ENCODE measurements at regions of chr17 and their contacts with region 1.

Region 1: GRCh38 chr17:36188891-36189306 is 7.7 kb downstream of the CCL3L1 start:
- DNase-seq: peak; percentile 45
- H3K4me3 ChIP-seq: no peak overlapping the region
- H3K27ac ChIP-seq: peak overlapping the region; percentile 4 to 42 (median 32)
- H3K4me1 ChIP-seq: peaks cover 0 to 22% (median 6%) of the 10 kb centered on the region in 4 donors
- H3K27me3 ChIP-seq: peaks cover 11% of the 10 kb centered on the region
- CTCF ChIP-seq: no peak
- EP300 ChIP-seq: no peak
- POLR2A ChIP-seq: no peak

Region 2: GRCh38 chr17:36092230-36092629 is 96.7 kb before region 1 on chr17:
- in situ Hi-C with region 1: no loop called
- intact Hi-C with region 1: no loop called
- DNase-seq: no peak
- H3K4me3 ChIP-seq: no peak overlapping the region
- H3K27ac ChIP-seq: no peak overlapping the region
- H3K4me1 ChIP-seq: no peaks in the 10 kb centered on the region
- H3K27me3 ChIP-seq: no peaks in the 10 kb centered on the region
- CTCF ChIP-seq: no peak
- EP300 ChIP-seq: no peak
- POLR2A ChIP-seq: no peak

Region 3: DNA sequence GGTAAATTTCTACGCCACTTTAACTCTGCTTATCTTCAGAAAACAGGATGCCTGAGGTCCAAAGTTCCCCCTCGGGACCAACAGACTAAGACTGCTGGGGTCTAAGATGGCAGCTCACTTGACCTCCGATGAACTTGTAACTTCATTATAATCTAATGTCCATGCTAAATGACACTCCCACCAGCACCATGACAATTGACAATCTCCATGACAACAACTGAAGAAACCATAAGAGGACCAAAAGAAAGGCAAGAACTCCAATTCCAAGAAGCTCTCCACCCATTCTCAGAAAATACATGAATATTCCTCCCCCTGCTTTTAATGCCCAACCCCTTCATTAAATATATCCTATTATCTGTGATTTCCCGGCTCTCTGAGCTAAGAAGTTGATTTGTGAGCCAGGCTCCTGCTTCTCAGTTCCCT is 77.8 kb before region 1 on chr17:
- in situ Hi-C with region 1: loop called in 1 of 4 experiments (anchors 5 kb)
- intact Hi-C with region 1: no loop called
- DNase-seq: no peak
- H3K4me3 ChIP-seq: no peak overlapping the region
- H3K27ac ChIP-seq: no peak overlapping the region
- H3K4me1 ChIP-seq: no peaks in the 10 kb centered on the region
- H3K27me3 ChIP-seq: no peaks in the 10 kb centered on the region
- CTCF ChIP-seq: no peak
- EP300 ChIP-seq: no peak
- POLR2A ChIP-seq: no peak